IMR-90 (cell line): ENCODE measurements at regions of chr7 and their contacts with region 1.

Region 1: DNA sequence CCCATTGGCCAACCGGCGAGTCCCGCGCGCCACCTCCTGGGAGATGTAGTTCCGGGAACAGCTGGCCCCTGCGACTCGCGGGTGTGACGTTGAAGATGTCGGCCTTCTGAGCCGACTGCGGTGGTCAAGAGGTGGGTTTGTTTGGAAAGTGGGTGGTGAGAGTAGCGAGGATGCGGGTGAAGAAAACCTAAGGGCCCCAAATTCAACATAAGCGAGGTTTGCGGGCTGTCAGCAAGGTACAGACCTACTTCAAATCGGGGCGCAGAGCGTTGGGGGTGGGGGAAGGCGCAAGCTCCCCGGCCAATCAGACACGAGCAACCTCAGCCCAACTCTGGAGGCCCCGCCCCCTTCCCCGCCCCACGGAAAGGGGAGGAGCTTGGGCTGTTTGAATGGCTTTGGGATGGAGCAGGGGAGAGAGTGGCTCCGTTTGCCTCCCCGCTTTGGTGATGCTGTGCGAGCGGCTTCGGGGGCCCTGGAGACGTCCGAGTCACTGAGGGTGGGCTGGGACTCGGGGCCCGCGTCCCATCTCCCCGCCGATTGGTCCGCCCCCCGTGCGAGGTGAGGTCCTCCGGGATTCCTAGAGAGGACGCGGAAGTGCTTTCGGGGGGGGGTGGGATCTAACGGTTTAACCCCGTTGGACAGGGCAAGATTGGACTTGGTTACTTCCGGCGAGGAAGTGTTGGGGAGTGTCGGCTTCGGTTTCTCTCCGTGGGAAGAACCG is at the start of gene ZKSCAN5:
- DNase-seq: peak; percentile 96
- ATAC-seq: peak; percentile 93
- H3K4me3 ChIP-seq: peak within 1 kb of the TSS; percentile 61
- H3K27ac ChIP-seq: peak within 1 kb of the TSS; percentile 85
- H3K4me1 ChIP-seq: peaks cover 6% of the 10 kb centered on the region
- H3K27me3 ChIP-seq: no peaks in the 10 kb centered on the region
- CTCF ChIP-seq: 0 out of 2 replicates have a peak, but pooled peaks have one; percentile 11
- POLR2A ChIP-seq: peak; percentile 93
- RAD21 ChIP-seq: no peak
- total RNA-seq, gene ZKSCAN5: 15.8 and 16.3 TPM in 2 replicates

Region 2: GRCh38 chr7:99408379-99409191 is 96.2 kb before region 1 on chr7 and contains the starts of genes BUD31 and PDAP1:
- CTCF ChIA-PET with region 1: no interaction called
- POLR2A ChIA-PET with region 1: no interaction called
- dilution Hi-C with region 1: no loop called
- in situ Hi-C with region 1: no loop called
- intact Hi-C with region 1: no loop called
- DNase-seq: peak; percentile 95
- ATAC-seq: peak; percentile 89
- H3K4me3 ChIP-seq: peak within 1 kb of the TSS; percentile 57
- H3K27ac ChIP-seq: peak within 1 kb of the TSS; percentile 99
- H3K4me1 ChIP-seq: peaks cover 8% of the 10 kb centered on the region; the same call in 1 of the 2 replicates
- H3K27me3 ChIP-seq: no peaks in the 10 kb centered on the region
- CTCF ChIP-seq: no peak
- POLR2A ChIP-seq: peak; percentile 95
- RAD21 ChIP-seq: no peak
- total RNA-seq, gene BUD31: 72.6 and 111 TPM in 2 replicates
- total RNA-seq, gene PDAP1: 40.3 and 124 TPM in 2 replicates

Region 3: GRCh38 chr7:99472561-99473243 is 32.1 kb before region 1 on chr7 and contains the start of gene ZNF789:
- CTCF ChIA-PET with region 1: no interaction called
- POLR2A ChIA-PET with region 1: no interaction called
- dilution Hi-C with region 1: no loop called
- in situ Hi-C with region 1: no loop called
- intact Hi-C with region 1: loop called (anchors 1 kb)
- DNase-seq: peak; percentile 94
- ATAC-seq: peak; percentile 98
- H3K4me3 ChIP-seq: peak within 1 kb of the TSS; percentile 80
- H3K27ac ChIP-seq: peak within 1 kb of the TSS; percentile 57
- H3K4me1 ChIP-seq: 0 out of 2 replicates have a peak, but pooled peaks cover 2% of the 10 kb centered on the region
- H3K27me3 ChIP-seq: no peaks in the 10 kb centered on the region
- CTCF ChIP-seq: no peak; the same call in 1 of the 2 replicates
- POLR2A ChIP-seq: peak; percentile 63
- RAD21 ChIP-seq: no peak
- total RNA-seq, gene ZNF789: 4.2 and 4.8 TPM in 2 replicates

Region 4: DNA sequence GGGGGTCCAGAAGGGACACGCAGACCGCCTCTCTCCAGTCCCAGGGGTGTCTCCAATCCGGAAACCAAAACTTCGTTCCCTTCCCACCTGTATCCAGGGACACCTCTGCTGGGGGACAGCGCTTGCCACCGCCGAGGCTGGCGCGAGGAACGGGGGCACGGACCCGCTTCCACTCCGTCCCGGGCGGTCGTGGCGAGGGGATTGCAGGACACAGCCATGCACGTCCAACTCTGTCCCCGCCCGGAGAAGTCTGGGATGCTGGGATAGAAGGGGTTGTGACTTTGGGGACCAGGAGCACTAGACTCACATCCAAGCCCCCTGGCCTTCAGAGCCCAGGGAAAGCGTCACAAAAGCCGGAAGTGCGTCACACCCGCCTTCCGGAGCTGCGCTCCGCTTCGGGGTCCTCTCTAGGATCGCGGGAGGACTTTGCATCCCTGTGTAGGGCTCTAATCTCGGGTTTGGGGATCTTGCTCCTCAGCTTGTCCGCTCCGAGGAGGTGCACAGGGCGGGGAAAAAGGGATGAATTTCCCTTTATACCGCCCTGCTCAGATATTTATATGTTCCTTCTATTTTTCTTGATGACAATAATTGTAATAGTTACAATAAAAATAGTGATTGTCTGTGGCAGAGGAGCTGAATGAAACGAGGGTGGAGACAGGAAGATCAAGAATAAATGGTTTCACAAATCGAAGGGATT is 47.2 kb after region 1 on chr7 and contains the start of gene FAM200A:
- CTCF ChIA-PET with region 1: no interaction called
- POLR2A ChIA-PET with region 1: no interaction called
- dilution Hi-C with region 1: no loop called
- in situ Hi-C with region 1: no loop called
- intact Hi-C with region 1: loop called (anchors 2 kb)
- DNase-seq: peak; percentile 95
- ATAC-seq: peak; percentile 97
- H3K4me3 ChIP-seq: peak within 1 kb of the TSS; percentile 97
- H3K27ac ChIP-seq: peak within 1 kb of the TSS; percentile 91
- H3K4me1 ChIP-seq: no peaks in the 10 kb centered on the region
- H3K27me3 ChIP-seq: no peaks in the 10 kb centered on the region
- CTCF ChIP-seq: no peak
- POLR2A ChIP-seq: peak; percentile 86
- RAD21 ChIP-seq: no peak; the same call in 1 of the 2 replicates
- total RNA-seq, gene FAM200A: 5.9 and 10.3 TPM in 2 replicates

Region 5: GRCh38 chr7:99558306-99559174 is 53.8 kb after region 1 on chr7 and contains the start of gene ZNF655:
- CTCF ChIA-PET with region 1: no interaction called
- POLR2A ChIA-PET with region 1: no interaction called
- dilution Hi-C with region 1: no loop called
- in situ Hi-C with region 1: no loop called
- intact Hi-C with region 1: loop called (anchors 2 kb)
- DNase-seq: peak; percentile 85
- ATAC-seq: peak; percentile 71
- H3K4me3 ChIP-seq: peak within 1 kb of the TSS; percentile 83
- H3K27ac ChIP-seq: peak within 1 kb of the TSS; percentile 97
- H3K4me1 ChIP-seq: peaks cover 14% of the 10 kb centered on the region
- H3K27me3 ChIP-seq: no peaks in the 10 kb centered on the region
- CTCF ChIP-seq: no peak
- POLR2A ChIP-seq: peak; percentile 86
- RAD21 ChIP-seq: no peak
- total RNA-seq, gene ZNF655: 49.6 and 56.4 TPM in 2 replicates

Region 6: GRCh38 chr7:99616359-99617191 is 111.8 kb after region 1 on chr7 and contains the start of gene ZSCAN25:
- CTCF ChIA-PET with region 1: no interaction called
- POLR2A ChIA-PET with region 1: no interaction called
- dilution Hi-C with region 1: no loop called
- in situ Hi-C with region 1: no loop called
- intact Hi-C with region 1: loop called (anchors 2 kb)
- DNase-seq: peak; percentile 92
- ATAC-seq: peak; percentile 96
- H3K4me3 ChIP-seq: peak within 1 kb of the TSS; percentile 63
- H3K27ac ChIP-seq: peak within 1 kb of the TSS; percentile 54
- H3K4me1 ChIP-seq: no peaks in the 10 kb centered on the region
- H3K27me3 ChIP-seq: no peaks in the 10 kb centered on the region
- CTCF ChIP-seq: peak; percentile 52
- POLR2A ChIP-seq: peak; percentile 72
- RAD21 ChIP-seq: peak; percentile 28
- total RNA-seq, gene ZSCAN25: 9.0 and 9.2 TPM in 2 replicates